H1 (cell line): ENCODE measurements at regions of chr2 and their contacts with region 1.

Region 1: GRCh38 chr2:230913406-230914143 is 11.5 kb downstream of the GPR55 start:
- DNase-seq: no peak
- H3K4me3 ChIP-seq: no peak overlapping the region
- H3K27ac ChIP-seq: no peak overlapping the region
- H3K4me1 ChIP-seq: peaks cover 0 to 5% (median 0%) of the 10 kb centered on the region in 4 experiments; a peak in 1 of 7 replicates
- H3K27me3 ChIP-seq: no peaks in the 10 kb centered on the region
- CTCF ChIP-seq: peak; percentile 74 to 75 (median 75)
- EP300 ChIP-seq: no peak
- POLR2A ChIP-seq: no peak
- RAD21 ChIP-seq: peak; percentile 76 to 83

Region 2: GRCh38 chr2:230824406-230824978 is 89.1 kb before region 1 on chr2:
- CTCF ChIA-PET with region 1: interaction called, 26 read pairs
- POLR2A ChIA-PET with region 1: no interaction called
- DNase-seq: peak; percentile 60 to 66
- H3K4me3 ChIP-seq: no peak overlapping the region
- H3K27ac ChIP-seq: no peak overlapping the region
- H3K4me1 ChIP-seq: peaks cover 0 to 6% (median 2%) of the 10 kb centered on the region in 4 experiments; a peak in 4 of 7 replicates
- H3K27me3 ChIP-seq: no peaks in the 10 kb centered on the region; a peak in 2 of 7 replicates
- CTCF ChIP-seq: peak; percentile 8 to 90 (median 72)
- EP300 ChIP-seq: no peak
- POLR2A ChIP-seq: no peak
- RAD21 ChIP-seq: peak; percentile 92

Region 3: DNA sequence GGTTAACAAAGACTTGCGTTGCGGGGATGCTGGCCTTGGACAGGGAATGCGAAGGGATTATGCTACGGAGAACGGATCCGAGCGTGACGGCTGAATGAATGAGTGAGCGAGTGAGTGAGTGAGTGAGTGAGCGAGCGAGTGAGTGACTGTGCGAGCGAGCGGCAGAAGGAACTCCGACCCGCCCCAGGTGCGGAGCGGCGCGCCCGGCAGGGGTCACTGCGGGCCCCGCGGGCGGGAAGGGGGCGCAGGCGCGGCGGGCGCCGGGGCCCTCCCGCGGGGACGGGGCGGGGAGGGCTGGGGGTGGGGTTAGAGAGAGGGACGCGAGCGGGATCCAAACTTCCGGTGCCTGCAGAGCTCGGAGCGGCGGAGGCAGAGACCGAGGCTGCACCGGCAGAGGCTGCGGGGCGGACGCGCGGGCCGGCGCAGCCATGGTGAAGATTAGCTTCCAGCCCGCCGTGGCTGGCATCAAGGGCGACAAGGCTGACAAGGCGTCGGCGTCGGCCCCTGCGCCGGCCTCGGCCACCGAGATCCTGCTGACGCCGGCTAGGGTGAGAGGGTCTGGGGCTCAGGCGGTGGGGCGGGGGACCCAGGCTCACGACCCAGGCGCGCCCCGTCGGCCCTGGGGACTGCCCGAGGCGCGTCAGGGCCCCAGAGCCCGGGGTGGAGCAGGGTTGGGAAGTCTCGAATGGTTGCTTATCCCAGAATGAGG is 48.8 kb before region 1 on chr2 and contains the start of gene ITM2C:
- CTCF ChIA-PET with region 1: interaction called, 15 read pairs
- POLR2A ChIA-PET with region 1: interaction called, 6 read pairs
- DNase-seq: peak in 1 of 2 experiments; percentile 79
- H3K4me3 ChIP-seq: peak within 1 kb of the TSS; percentile 75 to 99 (median 84)
- H3K27ac ChIP-seq: peak within 1 kb of the TSS; percentile 82
- H3K4me1 ChIP-seq: peaks cover 12 to 56% (median 41%) of the 10 kb centered on the region in 4 experiments
- H3K27me3 ChIP-seq: no peaks in the 10 kb centered on the region; a peak in 1 of 7 replicates
- CTCF ChIP-seq: peak in 1 of 3 experiments; percentile 34; a peak in 2 of 4 replicates
- EP300 ChIP-seq: no peak
- POLR2A ChIP-seq: peak in 1 of 2 experiments; percentile 80; a peak in 2 of 3 replicates
- RAD21 ChIP-seq: no peak; a peak in 1 of 4 replicates
- total RNA-seq, gene ITM2C: 362 and 367 TPM in 2 replicates

Region 4: GRCh38 chr2:230873476-230874451 is 39.8 kb before region 1 on chr2:
- CTCF ChIA-PET with region 1: interaction called, 19 read pairs
- POLR2A ChIA-PET with region 1: interaction called, 6 read pairs
- DNase-seq: peak in 1 of 2 experiments; percentile 41
- H3K4me3 ChIP-seq: no peak overlapping the region
- H3K27ac ChIP-seq: no peak overlapping the region; the same call in 1 of the 2 replicates
- H3K4me1 ChIP-seq: peaks cover 17 to 33% (median 30%) of the 10 kb centered on the region in 4 experiments
- H3K27me3 ChIP-seq: no peaks in the 10 kb centered on the region
- CTCF ChIP-seq: no peak
- EP300 ChIP-seq: no peak
- POLR2A ChIP-seq: no peak
- RAD21 ChIP-seq: no peak

Region 5: GRCh38 chr2:230893841-230894781 is 19.5 kb before region 1 on chr2:
- CTCF ChIA-PET with region 1: interaction called, 30 read pairs
- POLR2A ChIA-PET with region 1: no interaction called
- DNase-seq: no peak
- H3K4me3 ChIP-seq: no peak overlapping the region
- H3K27ac ChIP-seq: no peak overlapping the region
- H3K4me1 ChIP-seq: peaks cover 0 to 12% (median 2%) of the 10 kb centered on the region in 4 experiments; a peak in 2 of 7 replicates
- H3K27me3 ChIP-seq: no peaks in the 10 kb centered on the region
- CTCF ChIP-seq: no peak
- EP300 ChIP-seq: no peak
- POLR2A ChIP-seq: no peak
- RAD21 ChIP-seq: no peak

Region 6: GRCh38 chr2:230902180-230902899 is 11.2 kb before region 1 on chr2:
- CTCF ChIA-PET with region 1: interaction called, 43 read pairs
- POLR2A ChIA-PET with region 1: interaction called, 5 read pairs
- DNase-seq: peak; percentile 51 to 78
- H3K4me3 ChIP-seq: peak overlapping the region in 2 of 4 experiments; percentile 42 to 46; a peak in 3 of 8 replicates
- H3K27ac ChIP-seq: peak overlapping the region; percentile 75
- H3K4me1 ChIP-seq: peaks cover 7 to 32% (median 18%) of the 10 kb centered on the region in 4 experiments
- H3K27me3 ChIP-seq: peaks cover 0 to 13% (median 0%) of the 10 kb centered on the region in 4 experiments; a peak in 3 of 7 replicates
- CTCF ChIP-seq: peak; percentile 90 to 97 (median 91)
- EP300 ChIP-seq: peak in 1 of 2 experiments; percentile 67; a peak in 1 of 3 replicates
- POLR2A ChIP-seq: peak in 1 of 2 experiments; percentile 31; a peak in 1 of 3 replicates
- RAD21 ChIP-seq: peak; percentile 91 to 94

Region 7: DNA sequence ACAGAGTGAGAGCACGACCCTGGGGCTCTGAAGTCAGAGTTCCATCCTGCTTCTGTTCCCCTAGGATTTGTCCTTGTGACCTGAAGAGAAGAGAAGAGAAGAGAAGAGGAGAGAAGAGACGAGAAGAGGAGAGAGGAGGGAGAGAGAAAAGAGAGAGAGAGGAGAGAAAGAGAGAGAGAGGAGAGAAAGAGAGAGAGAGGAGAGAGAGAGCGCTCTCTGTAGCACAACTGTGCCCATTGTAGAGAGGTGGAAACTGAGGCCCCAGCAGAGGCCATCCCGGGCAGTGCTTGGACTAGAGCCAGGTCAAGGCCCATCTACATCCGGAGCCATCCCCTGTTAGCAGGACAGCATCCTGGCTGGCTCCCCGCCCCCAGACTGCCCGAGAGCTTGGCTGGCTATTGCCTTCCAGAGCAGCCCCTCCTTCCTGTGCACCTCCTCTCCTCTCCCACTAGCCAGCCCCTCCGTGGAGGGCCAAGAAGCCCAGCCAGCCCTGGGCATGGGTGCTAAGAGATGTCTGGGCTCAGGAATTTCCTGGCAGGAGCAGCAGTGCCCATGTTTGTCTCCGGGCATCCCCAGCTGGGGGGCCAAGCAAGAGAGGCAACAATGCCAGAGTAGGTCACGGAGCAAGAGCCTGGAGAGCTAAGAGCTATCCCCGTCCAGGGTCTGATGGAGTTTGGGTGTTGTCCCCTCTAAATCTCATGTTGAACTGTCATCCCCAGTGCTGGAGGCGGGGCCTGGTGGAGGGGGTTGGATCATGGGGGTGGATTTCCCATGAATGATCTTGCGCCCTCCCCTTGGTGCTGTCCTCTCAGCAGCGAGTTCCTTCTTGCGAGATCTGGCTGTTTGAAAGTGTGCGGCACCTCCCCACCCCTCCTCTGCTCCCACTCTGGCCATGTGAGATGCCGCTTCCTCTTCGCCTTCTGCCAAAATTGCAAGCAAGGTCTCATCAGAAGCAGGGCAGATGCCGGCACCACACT is 29.6 kb after region 1 on chr2:
- CTCF ChIA-PET with region 1: interaction called, 10 read pairs
- POLR2A ChIA-PET with region 1: no interaction called
- DNase-seq: peak in 1 of 2 experiments; percentile 43
- H3K4me3 ChIP-seq: no peak overlapping the region
- H3K27ac ChIP-seq: no peak overlapping the region
- H3K4me1 ChIP-seq: no peaks in the 10 kb centered on the region; a peak in 1 of 7 replicates
- H3K27me3 ChIP-seq: no peaks in the 10 kb centered on the region
- CTCF ChIP-seq: no peak
- EP300 ChIP-seq: no peak
- POLR2A ChIP-seq: no peak
- RAD21 ChIP-seq: no peak